ENCODE measurements at regions of chr2 and their contacts with region 1.

Region 1: GRCh38 chr2:73085691-73086360 is 14.3 kb upstream of the SFXN5 start:
- DNase-seq: peak; percentile 78
- H3K4me3 ChIP-seq: no peak overlapping the region
- H3K27ac ChIP-seq: no peak overlapping the region
- H3K4me1 ChIP-seq: no peaks in the 10 kb centered on the region
- H3K27me3 ChIP-seq: no peaks in the 10 kb centered on the region
- CTCF ChIP-seq: peak; percentile 53 to 85 (median 74)
- POLR2A ChIP-seq: no peak

Region 2: GRCh38 chr2:73020657-73021370 is 65.0 kb before region 1 on chr2:
- intact Hi-C with region 1: no loop called
- DNase-seq: no peak
- H3K4me3 ChIP-seq: no peak overlapping the region
- H3K27ac ChIP-seq: no peak overlapping the region
- H3K4me1 ChIP-seq: no peaks in the 10 kb centered on the region
- H3K27me3 ChIP-seq: no peaks in the 10 kb centered on the region
- CTCF ChIP-seq: no peak
- POLR2A ChIP-seq: no peak

Region 3: GRCh38 chr2:73156539-73157124 is 70.8 kb after region 1 on chr2:
- intact Hi-C with region 1: loop called (anchors 2 kb)
- DNase-seq: no peak
- H3K4me3 ChIP-seq: no peak overlapping the region
- H3K27ac ChIP-seq: no peak overlapping the region
- H3K4me1 ChIP-seq: no peaks in the 10 kb centered on the region
- H3K27me3 ChIP-seq: no peaks in the 10 kb centered on the region
- CTCF ChIP-seq: peak in 3 of 4 experiments; percentile 50 to 66 (median 61)
- POLR2A ChIP-seq: no peak

Region 4: GRCh38 chr2:73176881-73177644 is 91.2 kb after region 1 on chr2:
- intact Hi-C with region 1: loop called (anchors 5 kb)
- DNase-seq: peak; percentile 86
- H3K4me3 ChIP-seq: peak overlapping the region; percentile 49 to 50
- H3K27ac ChIP-seq: peak overlapping the region; percentile 62 to 67
- H3K4me1 ChIP-seq: peaks cover 9% of the 10 kb centered on the region
- H3K27me3 ChIP-seq: no peaks in the 10 kb centered on the region
- CTCF ChIP-seq: peak; percentile 92 to 98 (median 98)
- POLR2A ChIP-seq: no peak